ENCODE measurements at regions of chr11 and their contacts with region 1.

Region 1: DNA sequence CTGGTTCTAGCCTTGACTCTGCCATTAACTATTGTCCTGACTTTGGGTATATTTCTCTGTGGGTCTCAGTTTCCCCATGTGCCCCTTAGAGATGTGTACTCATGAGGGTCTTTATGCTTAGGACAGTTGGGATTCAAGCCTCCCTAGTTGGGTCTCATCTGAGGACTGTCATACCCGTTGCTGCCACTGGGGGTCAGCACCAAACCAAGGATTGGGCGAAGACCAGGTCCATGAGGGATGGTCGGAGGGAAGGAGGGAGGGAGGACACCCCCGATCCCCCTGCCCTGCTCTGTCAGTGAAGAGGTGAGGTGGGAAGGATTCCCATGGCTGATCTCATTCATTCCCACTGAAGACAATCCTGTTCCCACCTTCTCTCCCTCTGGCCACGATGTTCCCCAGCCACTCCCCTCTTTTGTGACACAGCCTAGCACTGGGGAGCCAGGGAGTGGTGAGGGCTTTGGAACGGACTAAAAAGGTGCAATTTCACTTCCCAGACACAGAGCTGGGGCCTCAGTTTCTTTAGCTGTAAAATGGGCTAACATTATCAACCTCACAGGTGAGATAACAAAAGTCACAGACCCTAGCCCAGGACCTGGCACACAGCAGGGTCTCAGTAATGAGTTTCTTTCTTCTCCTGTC is 12.4 kb upstream of the KLHL35 start:
- DNase-seq: peak; percentile 70
- H3K4me3 ChIP-seq: no peak overlapping the region
- H3K27ac ChIP-seq: no peak overlapping the region
- H3K4me1 ChIP-seq: no peaks in the 10 kb centered on the region
- H3K27me3 ChIP-seq: no peaks in the 10 kb centered on the region
- CTCF ChIP-seq: peak; percentile 85 to 92
- POLR2A ChIP-seq: no peak

Region 2: DNA sequence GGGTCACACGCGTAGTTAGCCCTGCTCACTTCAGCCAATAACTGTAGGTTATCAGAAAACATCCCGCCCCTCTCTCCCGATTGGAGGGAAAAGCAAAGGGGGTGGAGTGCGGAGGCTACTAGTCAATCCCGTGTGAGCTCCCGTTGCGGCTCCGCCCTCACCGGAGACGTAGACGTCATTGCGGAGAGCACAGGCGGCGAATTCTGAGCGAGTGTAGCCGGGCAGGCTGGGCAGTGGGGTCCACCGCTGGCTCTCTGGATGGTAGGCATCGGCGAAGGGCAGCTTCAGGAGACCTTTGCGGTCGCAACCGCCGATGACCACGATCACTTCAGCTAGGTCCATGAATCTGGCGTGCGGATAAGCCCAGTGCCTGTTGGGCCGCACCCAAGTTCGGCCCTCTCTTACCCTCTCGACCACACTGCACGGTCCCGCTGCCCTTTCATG is 17.1 kb before region 1 on chr11:
- CTCF ChIA-PET with region 1: interaction called, 10 read pairs
- POLR2A ChIA-PET with region 1: no interaction called
- dilution Hi-C with region 1: no loop called
- intact Hi-C with region 1: no loop called
- DNase-seq: peak; percentile 96
- H3K4me3 ChIP-seq: peak overlapping the region in 1 of 3 experiments; percentile 34
- H3K27ac ChIP-seq: no peak overlapping the region
- H3K4me1 ChIP-seq: peaks cover 9% of the 10 kb centered on the region
- H3K27me3 ChIP-seq: peaks cover 26 to 29% of the 10 kb centered on the region in 2 experiments
- CTCF ChIP-seq: no peak
- POLR2A ChIP-seq: peak; percentile 82

Region 3: DNA sequence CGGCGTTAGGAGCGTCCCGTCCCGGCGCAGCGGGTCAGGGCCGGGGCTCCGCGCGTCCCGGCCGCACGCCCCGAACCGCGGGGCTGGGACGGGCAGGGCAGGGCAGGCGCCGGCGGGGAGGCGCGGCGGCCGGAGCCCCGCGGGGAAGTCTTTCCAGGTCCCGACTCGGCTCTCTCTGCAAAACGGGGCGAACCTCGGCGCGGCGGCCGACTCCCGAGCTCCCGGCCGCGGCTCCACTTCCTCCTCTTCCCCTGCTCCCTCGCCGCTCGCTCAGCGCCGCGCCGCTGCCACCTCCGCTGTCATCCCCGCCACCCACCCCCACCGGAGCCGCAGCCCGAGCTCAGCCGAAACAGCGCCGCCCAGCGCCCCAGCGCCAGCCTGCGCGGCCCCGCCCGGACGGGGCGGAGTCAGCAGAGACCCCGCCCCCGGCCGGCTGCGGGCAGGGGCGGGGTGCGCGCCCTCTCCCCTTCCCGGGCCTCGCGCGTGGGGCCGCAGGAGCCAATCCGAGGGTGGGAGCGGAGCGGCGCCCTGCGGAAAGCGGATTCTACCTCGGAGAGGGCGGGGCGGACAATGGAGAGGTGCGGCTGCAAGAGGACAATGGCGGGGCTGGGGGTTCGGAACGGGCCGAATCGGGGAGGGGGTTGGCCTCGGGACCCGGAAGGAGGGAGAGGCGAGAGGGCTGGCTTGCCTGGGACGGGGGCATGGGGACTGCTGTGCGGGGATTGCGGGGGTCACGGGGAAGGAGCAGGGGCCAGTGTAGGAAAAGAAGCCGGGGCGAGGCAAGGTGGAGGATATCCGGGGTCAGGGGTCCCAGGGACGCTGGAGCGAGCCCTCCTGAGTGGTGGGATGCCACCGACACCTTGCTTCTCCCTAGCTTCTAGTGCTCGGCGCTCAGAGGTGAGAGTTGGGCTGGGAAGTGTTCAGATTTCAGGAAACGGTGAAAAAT is 80.4 kb after region 1 on chr11 and contains the start of gene GDPD5:
- CTCF ChIA-PET with region 1: interaction called, 115 read pairs
- POLR2A ChIA-PET with region 1: no interaction called
- dilution Hi-C with region 1: loop called (anchors 10 kb)
- intact Hi-C with region 1: loop called (anchors 1 kb)
- DNase-seq: peak; percentile 79
- H3K4me3 ChIP-seq: peak within 1 kb of the TSS; percentile 36 to 74 (median 68)
- H3K27ac ChIP-seq: no peak within 1 kb of the TSS
- H3K4me1 ChIP-seq: peaks cover 22% of the 10 kb centered on the region
- H3K27me3 ChIP-seq: no peaks in the 10 kb centered on the region
- CTCF ChIP-seq: peak; percentile 51 to 59
- POLR2A ChIP-seq: peak; percentile 14
- total RNA-seq, gene GDPD5: 50.1 and 79.2 TPM in 2 replicates

Region 4: GRCh38 chr11:75532200-75533048 is 87.0 kb after region 1 on chr11:
- CTCF ChIA-PET with region 1: interaction called, 115 read pairs
- POLR2A ChIA-PET with region 1: no interaction called
- dilution Hi-C with region 1: loop called (anchors 10 kb)
- intact Hi-C with region 1: loop called (anchors 1 kb)
- DNase-seq: peak; percentile 76
- H3K4me3 ChIP-seq: no peak overlapping the region
- H3K27ac ChIP-seq: no peak overlapping the region
- H3K4me1 ChIP-seq: peaks cover 13% of the 10 kb centered on the region
- H3K27me3 ChIP-seq: no peaks in the 10 kb centered on the region
- CTCF ChIP-seq: peak; percentile 72 to 78
- POLR2A ChIP-seq: no peak

Region 5: GRCh38 chr11:75717608-75718418 is 272.4 kb after region 1 on chr11 and contains the start of gene MOGAT2:
- CTCF ChIA-PET with region 1: no interaction called
- POLR2A ChIA-PET with region 1: no interaction called
- dilution Hi-C with region 1: no loop called
- intact Hi-C with region 1: no loop called
- DNase-seq: no peak
- H3K4me3 ChIP-seq: no peak within 1 kb of the TSS
- H3K27ac ChIP-seq: no peak within 1 kb of the TSS
- H3K4me1 ChIP-seq: no peaks in the 10 kb centered on the region
- H3K27me3 ChIP-seq: peaks cover 2 to 6% of the 10 kb centered on the region in 2 experiments
- CTCF ChIP-seq: no peak
- POLR2A ChIP-seq: no peak
- total RNA-seq, gene MOGAT2: not detected in 2 replicates